KBM-7 (cell line): ENCODE measurements at regions of chrX and their contacts with region 1.

Region 1: DNA sequence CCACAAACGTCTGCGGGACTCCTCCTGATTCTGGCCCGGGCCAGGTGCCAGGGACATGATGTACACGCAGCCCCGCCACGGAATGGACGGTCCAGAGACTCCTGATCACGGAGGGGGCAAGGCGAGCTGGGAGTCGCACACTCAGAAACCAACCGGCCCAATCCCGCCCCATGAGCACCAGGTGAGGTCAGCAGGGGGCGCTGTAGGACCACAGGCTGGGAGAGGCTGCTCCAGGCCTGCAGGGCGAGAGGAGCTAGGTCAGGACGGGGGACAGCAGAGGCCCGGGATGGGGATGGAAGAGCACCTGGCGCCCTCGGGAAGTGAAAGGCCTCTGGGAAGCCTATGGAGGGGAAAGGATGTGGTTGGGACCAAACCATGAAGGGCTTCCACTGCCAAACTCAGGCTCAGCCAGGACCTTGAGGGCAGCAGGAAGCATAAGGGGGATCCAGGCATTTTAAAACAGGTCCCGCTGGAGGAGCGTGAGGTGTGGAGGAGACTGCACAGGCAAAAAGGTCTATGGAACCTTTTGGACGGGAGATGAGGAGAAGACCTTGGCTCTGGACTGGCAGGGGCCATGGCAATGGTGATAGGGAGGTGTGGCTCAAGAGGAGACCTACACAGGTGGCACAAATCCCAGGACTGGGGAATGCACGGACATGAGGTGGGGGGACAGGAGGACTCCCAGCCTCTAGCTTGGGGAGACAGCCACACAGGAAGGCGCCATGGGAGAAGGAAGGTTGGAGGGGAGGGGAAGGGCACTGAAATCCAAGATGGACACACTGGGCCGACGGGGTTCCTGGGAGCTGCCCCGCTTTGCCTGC is 79.2 kb downstream of the MTMR1 start:
- DNase-seq: peak; percentile 87

Region 2: GRCh38 chrX:150887906-150888465 is 115.6 kb after region 1 on chrX:
- in situ Hi-C with region 1: no loop called
- DNase-seq: no peak

Region 3: GRCh38 chrX:151082076-151082948 is 310.0 kb after region 1 on chrX:
- in situ Hi-C with region 1: loop called (anchors 25 kb)
- DNase-seq: peak; percentile 83

Region 4: GRCh38 chrX:151680805-151681204 is 908.4 kb after region 1 on chrX:
- in situ Hi-C with region 1: loop called (anchors 25 kb)
- DNase-seq: peak; percentile 72